B cell (primary cell): ENCODE measurements at regions of chr17 and their contacts with region 1.

Region 1: GRCh38 chr17:68172461-68172954 is 75.3 kb upstream of the AMZ2 start:
- DNase-seq: peak; percentile 87
- ATAC-seq: peak; percentile 94
- H3K4me3 ChIP-seq: no peak overlapping the region
- H3K4me3 Mint-ChIP-seq: no peak overlapping the region
- H3K27ac ChIP-seq: no peak overlapping the region
- H3K27ac Mint-ChIP-seq: no peak overlapping the region
- H3K4me1 ChIP-seq: peaks cover 0 to 9% of the 10 kb centered on the region in 2 donors
- H3K4me1 Mint-ChIP-seq: peaks cover 3% of the 10 kb centered on the region
- H3K27me3 ChIP-seq: no peaks in the 10 kb centered on the region
- H3K27me3 Mint-ChIP-seq: no peaks in the 10 kb centered on the region
- CTCF ChIP-seq: peak; percentile 99

Region 2: DNA sequence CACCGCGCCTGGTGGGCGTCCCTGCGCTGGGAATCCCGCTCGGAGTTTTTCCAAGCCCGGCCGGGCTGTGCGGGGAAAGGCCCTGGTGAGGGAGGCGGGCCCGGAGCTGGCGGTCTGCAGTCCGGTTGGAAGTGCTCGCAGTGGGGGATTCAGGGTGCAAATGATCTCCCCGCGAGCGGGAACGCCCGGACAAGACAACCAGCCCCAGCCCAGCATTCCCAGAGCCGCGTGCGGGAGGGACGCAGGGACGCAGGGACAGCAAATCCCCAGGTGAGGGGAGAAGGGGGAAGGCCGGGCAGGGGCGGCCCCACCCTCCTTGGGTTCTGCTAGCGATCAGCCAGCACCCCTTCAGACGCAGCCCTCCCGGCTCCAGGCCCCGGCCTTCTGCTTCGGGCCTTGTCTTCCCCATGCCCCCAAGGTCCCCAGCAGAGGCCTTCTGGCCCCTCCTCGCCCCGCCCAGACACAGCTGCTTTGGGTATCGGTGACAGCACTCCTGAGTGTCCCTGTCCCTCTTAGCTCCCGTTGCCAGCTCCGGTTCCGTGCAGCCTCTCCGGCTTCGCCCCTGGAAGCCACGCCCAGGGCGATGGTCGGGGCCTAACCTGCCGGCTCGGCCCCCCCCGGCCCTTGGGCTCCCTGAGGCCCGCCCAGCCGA is 24.6 kb after region 1 on chr17:
- CTCF ChIA-PET with region 1: interaction called, 85 read pairs
- POLR2A ChIA-PET with region 1: interaction called, 6 read pairs
- intact Hi-C with region 1: loop called (anchors 1 kb)
- DNase-seq: peak; percentile 62
- ATAC-seq: peak; percentile 22
- H3K4me3 ChIP-seq: peak overlapping the region in 4 of 5 experiments; percentile 39 to 72 (median 56)
- H3K4me3 Mint-ChIP-seq: peak overlapping the region; percentile 96
- H3K27ac ChIP-seq: no peak overlapping the region
- H3K27ac Mint-ChIP-seq: no peak overlapping the region
- H3K4me1 ChIP-seq: peaks cover 50 to 56% of the 10 kb centered on the region in 2 donors
- H3K4me1 Mint-ChIP-seq: peaks cover 45% of the 10 kb centered on the region
- H3K27me3 ChIP-seq: peaks cover 0 to 48% (median 17%) of the 10 kb centered on the region in 4 experiments
- H3K27me3 Mint-ChIP-seq: peaks cover 7% of the 10 kb centered on the region
- CTCF ChIP-seq: no peak